ENCODE measurements at regions of chr1 and their contacts with region 1.

Region 1: GRCh38 chr1:47437447-47438164 is at the start of gene FOXD2:
- DNase-seq: peak; percentile 51 to 93
- H3K4me3 ChIP-seq: peak within 1 kb of the TSS; percentile 76 to 78
- H3K27ac ChIP-seq: peak within 1 kb of the TSS; percentile 94 to 95
- H3K4me1 ChIP-seq: peaks cover 7 to 35% of the 10 kb centered on the region in 2 donors
- H3K27me3 ChIP-seq: no peaks in the 10 kb centered on the region
- CTCF ChIP-seq: peak; percentile 90 to 99 (median 97)
- total RNA-seq, gene FOXD2: 1.3 TPM

Region 2: GRCh38 chr1:47313915-47314664 is 123.5 kb before region 1 on chr1 and contains the start of gene STIL:
- intact Hi-C with region 1: loop called (anchors 5 kb)
- DNase-seq: peak; percentile 93 to 99
- H3K4me3 ChIP-seq: peak within 1 kb of the TSS; percentile 69 to 85
- H3K27ac ChIP-seq: peak within 1 kb of the TSS; percentile 68 to 87
- H3K4me1 ChIP-seq: peaks cover 0 to 7% of the 10 kb centered on the region in 2 donors
- H3K27me3 ChIP-seq: no peaks in the 10 kb centered on the region
- CTCF ChIP-seq: no peak
- total RNA-seq, gene STIL: 0.11 TPM

Region 3: DNA sequence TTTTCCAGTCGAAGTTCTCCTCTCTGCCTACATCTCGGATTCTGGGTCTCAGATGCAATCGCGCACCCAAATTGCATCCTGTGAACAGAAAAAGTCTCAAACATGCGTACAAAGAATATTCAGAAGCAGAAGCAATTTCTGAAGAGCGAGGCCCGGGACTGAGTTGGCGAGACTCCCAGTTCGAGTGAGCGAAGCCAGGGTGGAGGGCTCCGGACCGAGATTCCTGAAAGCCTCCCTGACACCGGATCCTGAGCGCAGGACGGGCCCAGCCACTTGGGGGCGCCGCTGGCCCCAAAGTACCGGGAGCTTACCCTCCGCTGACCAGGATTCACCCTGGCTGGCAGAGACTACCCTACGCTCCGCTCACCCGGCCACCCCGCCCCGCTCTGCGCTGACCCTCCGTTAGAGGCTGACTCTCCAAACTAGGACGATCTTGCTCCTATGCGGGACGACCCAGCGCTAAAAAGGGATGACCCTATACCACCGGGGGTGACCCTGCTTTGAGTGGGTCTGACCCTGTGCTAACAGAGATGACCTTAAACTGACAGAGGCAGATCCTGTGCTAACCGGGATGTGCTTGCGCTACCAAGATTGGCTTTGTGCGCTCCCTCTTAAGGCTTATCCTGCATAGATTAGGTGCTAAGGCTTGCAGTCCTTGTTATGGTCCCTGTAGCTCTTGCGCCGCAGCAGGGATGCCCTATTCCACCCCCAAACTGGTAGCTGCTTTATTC is 12.4 kb after region 1 on chr1:
- intact Hi-C with region 1: no loop called
- DNase-seq: no peak
- H3K4me3 ChIP-seq: no peak overlapping the region
- H3K27ac ChIP-seq: no peak overlapping the region
- H3K4me1 ChIP-seq: no peaks in the 10 kb centered on the region
- H3K27me3 ChIP-seq: no peaks in the 10 kb centered on the region
- CTCF ChIP-seq: peak in 2 of 3 experiments; percentile 28 to 30

Region 4: GRCh38 chr1:47507881-47508701 is 70.5 kb after region 1 on chr1:
- intact Hi-C with region 1: loop called (anchors 2 kb)
- DNase-seq: peak in 1 of 2 donors; percentile 69
- H3K4me3 ChIP-seq: peak overlapping the region; percentile 64 to 83
- H3K27ac ChIP-seq: peak overlapping the region; percentile 59 to 83
- H3K4me1 ChIP-seq: peaks cover 6 to 15% of the 10 kb centered on the region in 2 donors
- H3K27me3 ChIP-seq: no peaks in the 10 kb centered on the region
- CTCF ChIP-seq: no peak

Region 5: DNA sequence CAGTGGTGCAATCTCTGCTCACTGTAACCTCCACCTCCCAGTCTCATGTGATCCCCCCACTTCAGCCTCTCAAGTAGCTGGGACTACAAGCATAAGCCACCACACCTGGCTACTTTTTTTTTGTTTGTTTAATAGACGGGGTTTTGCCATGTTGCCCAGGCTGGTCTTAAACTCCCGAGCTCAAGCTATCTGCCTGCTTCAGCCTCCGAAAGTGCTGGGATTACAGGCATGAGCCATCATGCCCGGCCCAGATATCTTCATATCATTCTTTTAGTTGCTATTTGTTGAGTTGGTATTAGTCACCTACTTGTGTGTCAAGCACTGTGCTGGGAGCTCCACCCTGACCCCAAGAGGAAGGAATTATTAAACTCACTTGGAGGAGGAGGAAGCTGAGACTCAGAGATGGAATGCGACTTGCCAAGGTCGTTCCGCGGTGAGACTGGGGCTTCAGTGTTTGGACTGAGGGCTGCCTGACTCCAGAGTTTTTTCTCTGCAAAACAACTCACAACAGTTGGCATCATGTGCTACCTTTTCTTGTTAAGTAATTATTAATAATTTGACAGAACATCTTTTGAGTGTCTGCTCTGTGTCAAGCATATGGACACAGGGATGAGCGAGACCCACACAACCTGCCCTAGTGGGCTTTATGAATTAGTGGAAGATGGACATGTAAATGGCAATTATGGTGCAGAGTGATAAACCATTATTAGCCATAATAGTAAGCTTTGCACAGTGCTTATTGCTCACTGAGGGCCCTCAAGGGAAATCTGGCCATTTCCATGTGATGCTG is 132.3 kb after region 1 on chr1:
- intact Hi-C with region 1: loop called (anchors 2 kb)
- DNase-seq: peak; percentile 31 to 89
- H3K4me3 ChIP-seq: no peak overlapping the region
- H3K27ac ChIP-seq: peak overlapping the region in 1 of 2 donors; percentile 22
- H3K4me1 ChIP-seq: peaks cover 0 to 9% of the 10 kb centered on the region in 2 donors
- H3K27me3 ChIP-seq: no peaks in the 10 kb centered on the region
- CTCF ChIP-seq: peak; percentile 45 to 69 (median 69)

Region 6: DNA sequence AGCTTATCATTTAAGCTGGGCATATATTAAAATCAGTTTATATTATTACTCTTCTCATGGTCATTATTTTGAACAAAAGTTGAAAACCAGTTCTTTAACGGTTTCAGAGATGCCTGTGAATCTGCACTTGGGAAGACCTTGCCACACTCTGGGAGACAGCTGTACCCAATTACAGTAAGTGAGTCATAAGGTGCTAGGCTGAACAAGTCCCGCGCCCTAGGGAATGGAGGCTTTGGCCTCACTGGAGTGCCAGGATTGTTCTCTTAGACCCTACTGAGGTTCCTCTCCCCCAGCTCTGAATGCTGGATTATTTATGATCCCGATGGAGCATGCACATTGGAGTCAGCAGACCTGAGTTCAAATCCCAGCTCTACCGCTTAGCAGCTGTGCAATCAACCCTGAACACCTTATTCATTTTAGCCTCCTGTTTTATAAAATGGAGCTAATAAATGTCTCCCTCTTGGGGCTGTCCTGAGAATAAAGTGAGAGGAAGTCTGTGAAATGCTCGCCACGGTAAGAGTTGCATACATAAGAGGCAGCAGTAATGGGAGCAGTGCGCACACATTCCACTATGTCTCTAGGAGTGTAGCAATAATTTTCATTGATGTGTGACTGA is 266.5 kb after region 1 on chr1:
- intact Hi-C with region 1: loop called (anchors 1 kb)
- DNase-seq: no peak
- H3K4me3 ChIP-seq: no peak overlapping the region
- H3K27ac ChIP-seq: peak overlapping the region; percentile 39 to 61
- H3K4me1 ChIP-seq: peaks cover 0 to 19% of the 10 kb centered on the region in 2 donors
- H3K27me3 ChIP-seq: no peaks in the 10 kb centered on the region
- CTCF ChIP-seq: peak; percentile 30 to 58 (median 48)

Region 7: GRCh38 chr1:47997289-47998200 is 559.9 kb after region 1 on chr1 and contains the start of gene TRABD2B:
- intact Hi-C with region 1: loop called (anchors 5 kb)
- DNase-seq: peak; percentile 27 to 94
- H3K4me3 ChIP-seq: peak within 1 kb of the TSS; percentile 74 to 96
- H3K27ac ChIP-seq: peak within 1 kb of the TSS; percentile 87 to 90
- H3K4me1 ChIP-seq: peaks cover 0 to 18% of the 10 kb centered on the region in 2 donors
- H3K27me3 ChIP-seq: no peaks in the 10 kb centered on the region
- CTCF ChIP-seq: peak; percentile 92 to 99 (median 99)
- total RNA-seq, gene TRABD2B: 7.9 TPM

Measured in ascending aorta (tissue), 2 donors.